T-cell (primary cell): ENCODE measurements at regions of chr10 and their contacts with region 1.

Region 1: GRCh38 chr10:23725548-23725947 is 286.7 kb downstream of the OTUD1 start:
- DNase-seq: no peak
- ATAC-seq: no peak
- H3K4me3 ChIP-seq: no peak overlapping the region
- H3K4me3 Mint-ChIP-seq: no peak overlapping the region
- H3K27ac ChIP-seq: no peak overlapping the region
- H3K27ac Mint-ChIP-seq: no peak overlapping the region
- H3K4me1 ChIP-seq: no peaks in the 10 kb centered on the region
- H3K4me1 Mint-ChIP-seq: peaks cover 0 to 2% (median 0%) of the 10 kb centered on the region in 3 donors
- H3K27me3 ChIP-seq: no peaks in the 10 kb centered on the region
- H3K27me3 Mint-ChIP-seq: peaks cover 0 to 8% of the 10 kb centered on the region in 2 donors

Region 2: GRCh38 chr10:24249829-24250415 is 524.4 kb after region 1 on chr10:
- CTCF ChIA-PET with region 1: interaction called in 1 of 2 experiments, 10 read pairs
- POLR2A ChIA-PET with region 1: no interaction called
- DNase-seq: no peak
- ATAC-seq: no peak
- H3K4me3 ChIP-seq: no peak overlapping the region
- H3K4me3 Mint-ChIP-seq: no peak overlapping the region
- H3K27ac ChIP-seq: no peak overlapping the region
- H3K27ac Mint-ChIP-seq: no peak overlapping the region
- H3K4me1 ChIP-seq: no peaks in the 10 kb centered on the region
- H3K4me1 Mint-ChIP-seq: no peaks in the 10 kb centered on the region
- H3K27me3 ChIP-seq: peaks cover 0 to 3% of the 10 kb centered on the region in 2 experiments
- H3K27me3 Mint-ChIP-seq: peaks cover 2 to 7% of the 10 kb centered on the region in 2 donors